ENCODE measurements at regions of chr15 and their contacts with region 1.

Region 1: DNA sequence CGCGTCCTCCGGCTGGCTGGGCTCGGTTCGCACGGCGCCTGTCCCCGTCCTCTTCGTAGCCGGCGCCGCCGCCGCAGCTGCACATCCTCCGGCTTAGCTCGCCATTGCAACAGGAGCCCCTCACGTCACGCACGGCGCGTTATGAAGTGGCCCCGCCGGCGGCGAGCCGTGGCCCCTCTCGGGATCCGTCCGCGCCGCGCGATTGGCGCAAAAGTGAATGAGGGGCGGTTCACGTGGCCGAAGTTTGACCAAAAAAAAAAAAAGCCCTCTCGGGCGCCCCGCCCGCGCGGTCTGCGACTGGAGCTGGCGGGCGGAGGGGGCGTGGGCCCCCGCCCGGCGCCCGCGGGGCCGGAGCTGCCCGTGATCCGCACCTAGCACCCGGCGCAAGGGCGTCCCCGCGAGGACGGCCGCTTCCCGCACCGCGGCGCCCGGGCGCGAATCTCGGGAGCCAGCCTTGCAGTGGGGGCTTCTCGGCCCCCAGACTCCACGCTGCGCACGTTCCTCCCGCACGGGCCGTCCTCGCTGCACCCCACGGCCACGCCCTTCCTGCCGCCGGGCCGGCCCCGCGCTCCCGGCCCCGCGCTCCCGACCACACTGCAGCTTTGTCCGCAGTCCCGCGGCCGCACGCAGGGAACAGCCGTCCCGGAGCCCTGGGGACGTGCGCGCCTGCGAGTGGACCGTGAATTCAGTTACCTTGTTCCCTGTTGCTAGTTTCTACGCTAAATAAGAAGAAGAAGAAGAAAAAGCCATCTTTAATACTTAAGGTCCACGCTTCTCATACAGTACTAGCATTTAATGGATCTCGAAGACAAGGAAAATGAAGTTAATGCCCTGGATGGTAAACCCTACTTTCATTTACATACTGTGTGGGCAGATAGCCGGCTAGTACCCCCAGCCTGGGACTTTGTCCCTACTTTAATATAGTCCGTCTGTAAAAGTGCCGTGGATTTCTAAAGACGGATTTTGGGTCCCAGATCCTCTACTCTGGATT is at the start of gene CHSY1:
- DNase-seq: peak; percentile 94
- H3K4me3 ChIP-seq: peak within 1 kb of the TSS; percentile 85
- H3K27ac ChIP-seq: peak within 1 kb of the TSS; percentile 81
- H3K4me1 ChIP-seq: peaks cover 8% of the 10 kb centered on the region
- H3K27me3 ChIP-seq: no peaks in the 10 kb centered on the region
- CTCF ChIP-seq: no peak
- total RNA-seq, gene CHSY1: 47.0 and 48.3 TPM in 2 replicates

Region 2: GRCh38 chr15:99344639-99345038 is 1907.5 kb before region 1 on chr15:
- CTCF ChIA-PET with region 1: no interaction called
- POLR2A ChIA-PET with region 1: no interaction called
- intact Hi-C with region 1: no loop called
- DNase-seq: no peak
- H3K4me3 ChIP-seq: no peak overlapping the region
- H3K27ac ChIP-seq: no peak overlapping the region
- H3K4me1 ChIP-seq: no peaks in the 10 kb centered on the region
- H3K27me3 ChIP-seq: no peaks in the 10 kb centered on the region
- CTCF ChIP-seq: no peak

Region 3: DNA sequence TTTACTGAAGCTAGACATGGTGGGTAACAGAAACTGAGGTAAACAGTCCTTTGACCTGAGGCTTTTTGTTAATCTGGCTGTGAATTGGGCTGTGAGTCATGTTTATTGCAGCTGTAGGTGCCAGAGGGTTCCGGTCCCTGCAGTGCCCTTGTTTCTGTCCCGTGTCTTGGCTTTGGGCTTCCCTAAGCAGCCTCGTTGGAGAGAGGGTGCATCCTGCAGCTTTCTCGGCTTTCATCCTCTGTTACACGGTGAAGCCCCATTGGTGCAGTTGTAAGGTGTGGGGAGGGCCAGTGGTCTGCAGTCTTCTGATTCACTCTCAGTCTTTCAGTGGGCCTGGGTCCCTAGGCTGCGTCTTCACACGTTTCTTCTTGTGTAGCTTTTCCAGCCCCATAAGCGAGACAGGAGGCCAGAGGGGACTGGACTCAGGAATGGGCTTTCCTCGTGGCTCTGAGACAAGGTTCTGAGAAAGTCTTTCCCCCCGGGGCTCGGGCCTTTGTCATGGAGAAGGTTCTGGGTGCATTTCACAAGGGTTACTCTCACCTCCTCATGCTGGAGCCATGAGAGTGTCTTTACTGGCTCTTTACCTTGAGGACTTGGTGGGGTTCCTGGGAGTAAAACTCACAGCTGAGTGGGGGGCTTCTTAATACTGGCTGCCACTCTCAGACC is 616.6 kb before region 1 on chr15:
- CTCF ChIA-PET with region 1: no interaction called
- POLR2A ChIA-PET with region 1: no interaction called
- intact Hi-C with region 1: loop called (anchors 10 kb)
- DNase-seq: no peak
- H3K4me3 ChIP-seq: no peak overlapping the region
- H3K27ac ChIP-seq: no peak overlapping the region
- H3K4me1 ChIP-seq: no peaks in the 10 kb centered on the region
- H3K27me3 ChIP-seq: no peaks in the 10 kb centered on the region
- CTCF ChIP-seq: no peak

Region 4: GRCh38 chr15:100918034-100918689 is 334.0 kb before region 1 on chr15:
- CTCF ChIA-PET with region 1: no interaction called
- POLR2A ChIA-PET with region 1: no interaction called
- intact Hi-C with region 1: loop called (anchors 10 kb)
- DNase-seq: peak; percentile 89
- H3K4me3 ChIP-seq: peak overlapping the region; percentile 51
- H3K27ac ChIP-seq: no peak overlapping the region
- H3K4me1 ChIP-seq: no peaks in the 10 kb centered on the region
- H3K27me3 ChIP-seq: peaks cover 32% of the 10 kb centered on the region
- CTCF ChIP-seq: peak; percentile 92

Region 5: DNA sequence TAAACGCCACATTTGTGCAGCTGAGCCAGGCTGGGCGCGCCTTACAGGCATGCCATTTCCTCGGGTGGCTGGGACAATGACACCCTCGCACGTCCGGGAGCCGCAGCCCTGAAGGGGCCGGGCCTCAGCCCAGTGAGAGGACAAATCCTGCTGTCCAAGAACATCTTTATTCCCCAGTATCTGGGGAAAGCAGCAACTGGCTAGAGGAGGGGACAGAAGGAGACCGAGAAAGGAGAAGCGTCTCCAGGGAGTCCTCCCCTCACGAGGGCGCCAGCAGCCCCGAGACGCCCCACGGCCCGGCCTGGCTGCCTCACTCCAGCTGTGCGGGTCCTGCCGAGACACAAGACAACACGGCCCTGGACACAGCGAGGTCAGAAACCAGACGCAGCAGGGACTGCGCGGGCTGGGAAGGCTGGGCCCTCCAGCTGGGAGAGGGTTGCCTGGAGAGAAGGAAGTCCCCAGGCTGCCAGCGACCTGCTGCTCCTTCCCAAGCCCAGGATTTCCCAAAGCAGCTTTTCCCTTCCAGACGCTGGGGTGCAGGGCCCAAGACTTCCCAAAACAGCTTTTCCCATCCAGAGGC is 130.5 kb before region 1 on chr15:
- CTCF ChIA-PET with region 1: no interaction called
- POLR2A ChIA-PET with region 1: no interaction called
- intact Hi-C with region 1: no loop called
- DNase-seq: peak; percentile 43
- H3K4me3 ChIP-seq: no peak overlapping the region
- H3K27ac ChIP-seq: peak overlapping the region; percentile 41
- H3K4me1 ChIP-seq: peaks cover 30% of the 10 kb centered on the region
- H3K27me3 ChIP-seq: no peaks in the 10 kb centered on the region
- CTCF ChIP-seq: peak; percentile 52

Region 6: DNA sequence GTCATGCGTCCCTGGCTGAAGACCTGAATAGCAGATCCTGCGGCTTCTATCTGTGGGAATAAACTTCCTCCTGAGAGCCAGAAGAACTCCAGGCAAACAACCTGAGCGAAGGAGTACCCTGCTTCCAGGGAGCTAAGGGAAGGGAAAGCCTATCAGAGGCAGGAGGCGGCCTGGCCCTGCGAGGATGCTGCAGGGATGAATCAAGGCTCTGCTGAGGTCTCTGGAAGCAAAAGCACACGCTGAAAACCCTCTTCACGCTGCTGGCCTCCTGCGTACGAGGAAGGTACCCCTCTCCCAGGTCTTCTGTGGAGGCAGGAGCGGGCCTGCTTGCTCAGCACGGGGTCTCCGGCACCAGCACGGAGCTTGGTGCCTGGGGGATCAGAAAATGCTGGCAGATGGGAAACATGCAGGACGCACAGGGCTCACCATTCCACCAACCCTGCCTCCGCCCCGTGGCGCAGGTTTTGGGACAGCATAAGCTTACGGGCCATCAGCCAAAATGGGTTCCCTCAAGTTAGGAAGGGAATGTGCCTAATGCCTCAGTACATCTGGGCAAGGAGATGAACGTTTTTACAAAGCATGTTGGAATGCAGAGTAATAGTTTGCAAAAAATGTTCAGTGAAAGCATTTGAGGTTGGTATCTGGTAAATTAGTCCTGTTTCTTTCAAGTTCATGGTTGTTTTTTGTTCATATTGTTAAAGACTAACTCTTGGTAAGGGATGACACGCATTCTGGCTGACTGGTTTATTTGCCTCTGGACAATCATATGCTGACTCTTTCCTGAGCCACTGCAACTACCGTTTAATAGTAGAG is 72.6 kb before region 1 on chr15:
- CTCF ChIA-PET with region 1: no interaction called
- POLR2A ChIA-PET with region 1: no interaction called
- intact Hi-C with region 1: loop called (anchors 5 kb)
- DNase-seq: no peak
- H3K4me3 ChIP-seq: no peak overlapping the region
- H3K27ac ChIP-seq: peak overlapping the region; percentile 29
- H3K4me1 ChIP-seq: peaks cover 8% of the 10 kb centered on the region
- H3K27me3 ChIP-seq: no peaks in the 10 kb centered on the region
- CTCF ChIP-seq: no peak